Stomach (tissue), 19 donors: ENCODE measurements at regions of chr14 and their contacts with region 1.

Region 1: GRCh38 chr14:67619446-67620216 is at the start of gene ARG2:
- DNase-seq: peak; percentile 99 to 100
- H3K4me3 ChIP-seq: peak within 1 kb of the TSS; percentile 52 to 72 (median 62)
- H3K27ac ChIP-seq: peak within 1 kb of the TSS; percentile 76 to 92 (median 81)
- H3K4me1 ChIP-seq: peaks cover 6 to 40% (median 18%) of the 10 kb centered on the region in 4 donors
- H3K27me3 ChIP-seq: no peaks in the 10 kb centered on the region
- CTCF ChIP-seq: peak in 2 of 7 experiments; percentile 11 to 12
- EP300 ChIP-seq: no peak
- POLR2A ChIP-seq: peak in 2 of 4 donors; percentile 4 to 51
- total RNA-seq, gene ARG2: 1.2 to 9.4 (median 3.9) TPM in 4 of 5 donors, not detected in the other

Region 2: GRCh38 chr14:67435615-67436346 is 183.8 kb before region 1 on chr14:
- intact Hi-C with region 1: no loop called
- DNase-seq: no peak
- H3K4me3 ChIP-seq: no peak overlapping the region
- H3K27ac ChIP-seq: no peak overlapping the region
- H3K4me1 ChIP-seq: peaks cover 0 to 10% (median 3%) of the 10 kb centered on the region in 4 donors
- H3K27me3 ChIP-seq: no peaks in the 10 kb centered on the region
- CTCF ChIP-seq: no peak
- EP300 ChIP-seq: no peak
- POLR2A ChIP-seq: no peak

Region 3: GRCh38 chr14:67666750-67667449 is 47.3 kb after region 1 on chr14:
- intact Hi-C with region 1: loop called (anchors 10 kb)
- DNase-seq: peak in 1 of 2 donors; percentile 79
- H3K4me3 ChIP-seq: no peak overlapping the region
- H3K27ac ChIP-seq: no peak overlapping the region
- H3K4me1 ChIP-seq: peaks cover 0 to 62% (median 31%) of the 10 kb centered on the region in 4 donors
- H3K27me3 ChIP-seq: no peaks in the 10 kb centered on the region
- CTCF ChIP-seq: peak in 5 of 7 experiments; percentile 30 to 77 (median 45)
- EP300 ChIP-seq: no peak
- POLR2A ChIP-seq: no peak